Calu3 (cell line): ENCODE measurements at regions of chr7 and their contacts with region 1.

Region 1: DNA sequence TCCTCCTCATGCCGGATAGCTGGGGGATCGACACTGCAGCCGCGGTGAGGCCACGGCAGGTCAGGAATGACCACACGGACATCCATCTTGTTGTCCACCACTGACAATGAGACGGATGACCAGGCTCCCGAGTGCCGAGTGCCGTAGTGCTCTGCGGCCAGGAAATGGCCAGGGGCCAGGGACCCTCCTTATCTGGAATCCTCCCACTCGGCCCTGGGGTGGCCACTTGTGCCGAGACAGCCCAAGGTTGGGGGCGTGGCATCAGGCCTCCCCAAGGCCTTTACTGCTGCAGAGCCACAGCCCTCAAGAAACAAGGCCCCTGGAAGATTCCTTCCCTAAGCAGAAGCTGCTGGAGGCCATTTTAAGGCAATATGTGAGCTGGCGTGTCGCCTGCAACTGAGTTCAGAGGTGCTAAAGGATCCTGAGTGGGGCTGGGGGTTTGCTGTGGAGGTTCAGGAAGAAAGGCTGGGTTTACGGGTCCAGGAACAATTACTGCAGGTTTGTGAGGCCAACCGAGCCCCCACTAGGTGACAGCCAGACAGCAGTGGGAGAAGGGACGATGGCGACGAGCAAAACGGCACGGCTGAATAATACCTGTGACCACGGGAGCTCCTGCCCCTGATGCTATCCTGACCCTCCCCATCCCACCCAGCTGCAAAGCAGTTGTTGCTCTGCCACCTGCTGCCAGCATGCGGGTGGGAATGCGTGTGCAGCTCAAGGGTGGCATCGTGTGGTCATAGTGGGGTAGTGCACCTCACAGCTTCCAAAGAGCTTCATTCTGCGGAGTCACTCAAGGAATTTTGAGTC is 31.6 kb upstream of the LEP start:
- DNase-seq: peak; percentile 73
- H3K4me3 Mint-ChIP-seq: no peak overlapping the region
- H3K27ac Mint-ChIP-seq: no peak overlapping the region
- H3K4me1 Mint-ChIP-seq: no peaks in the 10 kb centered on the region
- H3K27me3 Mint-ChIP-seq: peaks cover 55% of the 10 kb centered on the region
- CTCF ChIP-seq: peak; percentile 90

Region 2: GRCh38 chr7:127585044-127585953 is 624.1 kb before region 1 on chr7 and contains the start of gene GCC1:
- CTCF ChIA-PET with region 1: interaction called, 5 read pairs
- intact Hi-C with region 1: loop called (anchors 10 kb)
- DNase-seq: peak; percentile 95
- H3K4me3 Mint-ChIP-seq: peak within 1 kb of the TSS; percentile 95
- H3K27ac Mint-ChIP-seq: peak within 1 kb of the TSS; percentile 92
- H3K4me1 Mint-ChIP-seq: peaks cover 33% of the 10 kb centered on the region
- H3K27me3 Mint-ChIP-seq: no peaks in the 10 kb centered on the region
- CTCF ChIP-seq: no peak
- total RNA-seq, gene GCC1: 22.0 and 22.5 TPM in 2 replicates

Region 3: GRCh38 chr7:127708788-127709187 is 500.6 kb before region 1 on chr7:
- CTCF ChIA-PET with region 1: interaction called, 10 read pairs
- intact Hi-C with region 1: loop called (anchors 1 kb)
- DNase-seq: peak; percentile 73
- H3K4me3 Mint-ChIP-seq: no peak overlapping the region
- H3K27ac Mint-ChIP-seq: no peak overlapping the region
- H3K4me1 Mint-ChIP-seq: peaks cover 20% of the 10 kb centered on the region
- H3K27me3 Mint-ChIP-seq: no peaks in the 10 kb centered on the region
- CTCF ChIP-seq: peak; percentile 76

Region 4: GRCh38 chr7:127733986-127734385 is 475.4 kb before region 1 on chr7:
- CTCF ChIA-PET with region 1: no interaction called
- intact Hi-C with region 1: no loop called
- DNase-seq: no peak
- H3K4me3 Mint-ChIP-seq: no peak overlapping the region
- H3K27ac Mint-ChIP-seq: no peak overlapping the region
- H3K4me1 Mint-ChIP-seq: peaks cover 10% of the 10 kb centered on the region
- H3K27me3 Mint-ChIP-seq: no peaks in the 10 kb centered on the region
- CTCF ChIP-seq: no peak

Region 5: DNA sequence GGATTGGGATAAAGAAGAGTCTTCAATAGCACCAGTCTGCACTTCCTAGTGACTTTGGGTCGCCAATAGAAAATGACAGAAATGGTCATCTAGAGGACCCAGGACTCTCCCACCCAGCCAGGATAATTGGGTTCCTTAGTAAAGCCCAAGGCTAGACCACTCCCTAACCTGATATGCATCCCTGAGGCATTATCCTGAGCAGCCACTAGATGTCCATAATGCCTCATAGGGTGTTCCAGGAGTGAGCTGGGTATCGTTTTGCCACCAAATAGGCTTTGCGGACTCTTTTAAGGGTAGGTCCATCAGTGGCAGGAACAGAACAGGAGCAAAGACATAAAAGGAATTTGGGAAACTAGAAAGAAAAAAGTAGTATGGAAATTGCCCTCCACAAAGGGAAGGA is 173.7 kb before region 1 on chr7:
- CTCF ChIA-PET with region 1: interaction called, 9 read pairs
- intact Hi-C with region 1: loop called (anchors 5 kb)
- DNase-seq: peak; percentile 16
- H3K4me3 Mint-ChIP-seq: no peak overlapping the region
- H3K27ac Mint-ChIP-seq: no peak overlapping the region
- H3K4me1 Mint-ChIP-seq: peaks cover 4% of the 10 kb centered on the region
- H3K27me3 Mint-ChIP-seq: no peaks in the 10 kb centered on the region
- CTCF ChIP-seq: no peak

Region 6: DNA sequence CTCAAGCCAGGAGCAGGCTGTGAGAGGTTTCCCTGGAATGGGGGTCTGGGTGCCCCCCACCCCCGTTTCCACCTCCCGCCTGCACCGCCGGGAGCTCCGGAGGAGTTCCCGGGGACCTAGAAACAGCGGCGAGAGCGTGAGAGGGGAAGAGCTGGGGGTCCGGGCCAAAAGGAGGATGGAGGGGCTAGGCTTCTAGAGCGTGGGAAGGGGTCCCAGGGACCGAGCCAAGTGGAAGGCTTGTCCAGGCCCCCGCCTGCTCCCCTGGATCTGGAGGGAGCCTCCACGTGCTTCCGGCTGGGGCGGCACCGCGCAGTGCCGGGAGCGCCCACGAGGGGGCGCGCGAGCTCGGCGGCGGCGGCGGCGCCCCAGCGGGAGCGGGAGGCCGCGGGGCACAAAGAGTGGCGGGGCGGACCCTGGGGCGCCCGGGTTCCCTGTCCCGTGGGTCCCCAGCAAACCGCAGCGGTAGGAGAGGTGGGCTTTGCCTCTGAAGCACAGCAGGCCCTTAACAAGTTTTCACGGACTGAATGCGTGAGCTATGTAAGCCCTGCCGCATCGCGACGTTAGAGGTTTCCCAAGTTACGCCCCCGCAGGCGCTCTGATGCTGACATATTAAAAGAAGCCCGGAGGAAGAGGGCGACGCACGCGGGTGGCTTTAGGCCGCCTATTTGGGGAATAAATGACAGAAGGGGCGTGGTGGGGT is 73.8 kb before region 1 on chr7:
- CTCF ChIA-PET with region 1: interaction called, 55 read pairs
- intact Hi-C with region 1: loop called (anchors 1 kb)
- DNase-seq: peak; percentile 72
- H3K4me3 Mint-ChIP-seq: peak overlapping the region; percentile 70
- H3K27ac Mint-ChIP-seq: no peak overlapping the region
- H3K4me1 Mint-ChIP-seq: no peaks in the 10 kb centered on the region
- H3K27me3 Mint-ChIP-seq: peaks cover 66% of the 10 kb centered on the region
- CTCF ChIP-seq: peak; percentile 94

Region 7: GRCh38 chr7:128178611-128179010 is 30.8 kb before region 1 on chr7:
- CTCF ChIA-PET with region 1: no interaction called
- intact Hi-C with region 1: no loop called
- DNase-seq: no peak
- H3K4me3 Mint-ChIP-seq: no peak overlapping the region
- H3K27ac Mint-ChIP-seq: no peak overlapping the region
- H3K4me1 Mint-ChIP-seq: peaks cover 11% of the 10 kb centered on the region
- H3K27me3 Mint-ChIP-seq: peaks cover 66% of the 10 kb centered on the region
- CTCF ChIP-seq: no peak

Region 8: DNA sequence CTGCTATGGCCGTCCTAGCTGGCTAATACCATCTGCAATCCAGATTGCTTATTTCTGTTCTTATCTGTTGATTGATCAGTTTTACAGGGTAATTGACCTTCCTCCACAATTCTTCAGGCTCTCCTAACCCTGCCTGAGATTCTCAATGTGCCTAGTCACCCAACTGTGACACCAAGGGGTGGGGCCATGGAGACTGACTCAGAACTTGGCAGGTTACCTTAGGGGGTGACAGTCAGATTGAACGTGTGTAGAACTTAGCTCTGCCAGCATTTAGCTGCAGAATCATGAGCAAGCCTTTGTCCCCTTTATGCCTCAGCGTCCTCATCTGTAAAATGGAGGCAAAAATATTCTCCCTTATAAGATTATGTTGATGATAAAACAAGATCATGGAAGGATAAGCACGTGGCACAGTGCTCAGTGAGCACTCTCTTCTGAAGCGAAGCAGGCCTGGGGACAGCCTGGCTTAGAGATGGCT is 12.5 kb after region 1 on chr7:
- CTCF ChIA-PET with region 1: interaction called, 12 read pairs
- intact Hi-C with region 1: no loop called
- DNase-seq: peak; percentile 60
- H3K4me3 Mint-ChIP-seq: no peak overlapping the region
- H3K27ac Mint-ChIP-seq: no peak overlapping the region
- H3K4me1 Mint-ChIP-seq: peaks cover 15% of the 10 kb centered on the region
- H3K27me3 Mint-ChIP-seq: peaks cover 59% of the 10 kb centered on the region
- CTCF ChIP-seq: no peak